GM12878 (cell line): ENCODE measurements at regions of chr15 and their contacts with region 1.

Region 1: DNA sequence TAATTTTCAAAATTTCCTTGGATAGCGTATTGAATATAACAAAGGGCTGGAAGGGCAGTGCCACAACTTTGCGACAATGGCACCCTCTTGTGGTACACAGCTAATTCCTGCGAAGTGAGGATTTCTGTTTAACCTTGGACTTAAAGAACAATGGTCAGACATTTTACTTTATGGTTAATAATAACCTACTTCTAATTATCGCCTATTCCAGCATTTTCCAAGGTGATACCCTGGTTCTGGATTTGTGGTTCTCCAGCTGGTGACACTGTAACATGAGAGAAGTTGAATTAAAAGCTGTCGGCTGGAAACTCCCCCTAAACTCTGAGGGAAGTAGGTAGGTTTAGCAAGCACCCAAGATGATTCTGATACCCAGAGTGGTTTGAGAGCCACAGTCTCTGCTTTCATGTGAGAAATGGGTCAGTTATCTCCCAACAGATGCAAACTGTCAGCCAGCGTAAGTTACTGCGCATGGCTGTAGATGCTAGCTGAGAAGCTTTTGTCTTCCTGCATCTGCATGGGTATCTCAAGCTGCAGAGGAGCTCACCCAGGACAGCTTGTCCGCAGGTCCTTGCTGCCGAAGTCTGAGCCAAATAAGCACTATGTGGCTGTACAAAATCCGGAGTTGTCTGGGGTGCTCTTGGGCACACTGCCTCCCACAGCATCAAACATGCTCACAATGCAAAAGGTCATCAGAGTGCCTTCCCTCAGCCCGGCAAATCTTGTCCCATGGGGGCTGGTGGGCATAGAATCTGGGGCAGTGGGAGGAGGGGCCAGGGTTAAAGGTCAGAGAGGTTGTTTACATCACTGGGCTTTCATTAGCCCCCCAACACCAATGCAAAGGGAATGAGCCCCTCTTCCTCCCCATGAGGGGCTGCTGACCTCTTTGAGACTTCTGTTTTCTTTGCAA is 6.6 kb upstream of the CHSY1 start:
- DNase-seq: peak; percentile 51
- ATAC-seq: peak; percentile 88
- H3K4me3 ChIP-seq: no peak overlapping the region
- H3K27ac ChIP-seq: no peak overlapping the region
- H3K4me1 ChIP-seq: peaks cover 9% of the 10 kb centered on the region
- H3K27me3 ChIP-seq: no peaks in the 10 kb centered on the region
- CTCF ChIP-seq: peak; percentile 76 to 95 (median 92); a peak in 5 of 6 replicates
- EP300 ChIP-seq: peak in 1 of 2 experiments; percentile 70; a peak in 2 of 4 replicates
- POLR2A ChIP-seq: no peak
- RAD21 ChIP-seq: peak; percentile 97

Region 2: GRCh38 chr15:100349696-100350433 is 908.6 kb before region 1 on chr15:
- CTCF ChIA-PET with region 1: no interaction called
- POLR2A ChIA-PET with region 1: no interaction called
- RAD21 ChIA-PET with region 1: no interaction called
- SMC1A ChIA-PET with region 1: no interaction called
- in situ Hi-C with region 1: no loop called
- intact Hi-C with region 1: no loop called
- DNase-seq: peak; percentile 11
- ATAC-seq: peak; percentile 98
- H3K4me3 ChIP-seq: peak overlapping the region; percentile 62; the same call in 1 of the 2 replicates
- H3K27ac ChIP-seq: 0 out of 2 replicates have a peak overlapping the region, but pooled peaks have one; percentile 24
- H3K4me1 ChIP-seq: no peaks in the 10 kb centered on the region
- H3K27me3 ChIP-seq: no peaks in the 10 kb centered on the region
- CTCF ChIP-seq: peak; percentile 49 to 72 (median 68)
- EP300 ChIP-seq: no peak
- POLR2A ChIP-seq: no peak
- RAD21 ChIP-seq: peak; percentile 43

Region 3: GRCh38 chr15:101088788-101089583 is 169.5 kb before region 1 on chr15:
- CTCF ChIA-PET with region 1: interaction called, 126 read pairs
- POLR2A ChIA-PET with region 1: interaction called, 3 read pairs
- RAD21 ChIA-PET with region 1: interaction called, 69 read pairs
- SMC1A ChIA-PET with region 1: interaction called, 30 read pairs
- in situ Hi-C with region 1: loop called (anchors 5 kb)
- intact Hi-C with region 1: loop called (anchors 1 kb)
- DNase-seq: no peak
- ATAC-seq: peak; percentile 98
- H3K4me3 ChIP-seq: no peak overlapping the region
- H3K27ac ChIP-seq: no peak overlapping the region
- H3K4me1 ChIP-seq: no peaks in the 10 kb centered on the region
- H3K27me3 ChIP-seq: no peaks in the 10 kb centered on the region
- CTCF ChIP-seq: peak; percentile 94 to 98 (median 97)
- EP300 ChIP-seq: no peak
- POLR2A ChIP-seq: no peak
- RAD21 ChIP-seq: peak; percentile 80

Region 4: GRCh38 chr15:101121511-101122090 is 136.9 kb before region 1 on chr15:
- CTCF ChIA-PET with region 1: interaction called, 60 read pairs
- POLR2A ChIA-PET with region 1: interaction called, 5 read pairs
- RAD21 ChIA-PET with region 1: interaction called, 12 read pairs
- SMC1A ChIA-PET with region 1: interaction called, 29 read pairs
- in situ Hi-C with region 1: no loop called
- intact Hi-C with region 1: no loop called
- DNase-seq: no peak
- ATAC-seq: peak; percentile 79
- H3K4me3 ChIP-seq: no peak overlapping the region
- H3K27ac ChIP-seq: no peak overlapping the region
- H3K4me1 ChIP-seq: peaks cover 30% of the 10 kb centered on the region
- H3K27me3 ChIP-seq: no peaks in the 10 kb centered on the region; a peak in 1 of 4 replicates
- CTCF ChIP-seq: peak; percentile 32 to 56 (median 33); a peak in 5 of 6 replicates
- EP300 ChIP-seq: no peak
- POLR2A ChIP-seq: no peak
- RAD21 ChIP-seq: peak; percentile 54

Region 5: GRCh38 chr15:101201406-101202174 is 56.9 kb before region 1 on chr15:
- CTCF ChIA-PET with region 1: interaction called, 7 read pairs
- POLR2A ChIA-PET with region 1: no interaction called
- RAD21 ChIA-PET with region 1: interaction called, 6 read pairs
- SMC1A ChIA-PET with region 1: interaction called, 4 read pairs
- in situ Hi-C with region 1: no loop called
- intact Hi-C with region 1: loop called (anchors 2 kb)
- DNase-seq: no peak
- ATAC-seq: peak; percentile 7; the same call in 1 of the 3 replicates
- H3K4me3 ChIP-seq: no peak overlapping the region
- H3K27ac ChIP-seq: peak overlapping the region; percentile 31; the same call in 1 of the 2 replicates
- H3K4me1 ChIP-seq: peaks cover 48% of the 10 kb centered on the region
- H3K27me3 ChIP-seq: no peaks in the 10 kb centered on the region
- CTCF ChIP-seq: no peak
- EP300 ChIP-seq: no peak
- POLR2A ChIP-seq: no peak
- RAD21 ChIP-seq: no peak

Region 6: DNA sequence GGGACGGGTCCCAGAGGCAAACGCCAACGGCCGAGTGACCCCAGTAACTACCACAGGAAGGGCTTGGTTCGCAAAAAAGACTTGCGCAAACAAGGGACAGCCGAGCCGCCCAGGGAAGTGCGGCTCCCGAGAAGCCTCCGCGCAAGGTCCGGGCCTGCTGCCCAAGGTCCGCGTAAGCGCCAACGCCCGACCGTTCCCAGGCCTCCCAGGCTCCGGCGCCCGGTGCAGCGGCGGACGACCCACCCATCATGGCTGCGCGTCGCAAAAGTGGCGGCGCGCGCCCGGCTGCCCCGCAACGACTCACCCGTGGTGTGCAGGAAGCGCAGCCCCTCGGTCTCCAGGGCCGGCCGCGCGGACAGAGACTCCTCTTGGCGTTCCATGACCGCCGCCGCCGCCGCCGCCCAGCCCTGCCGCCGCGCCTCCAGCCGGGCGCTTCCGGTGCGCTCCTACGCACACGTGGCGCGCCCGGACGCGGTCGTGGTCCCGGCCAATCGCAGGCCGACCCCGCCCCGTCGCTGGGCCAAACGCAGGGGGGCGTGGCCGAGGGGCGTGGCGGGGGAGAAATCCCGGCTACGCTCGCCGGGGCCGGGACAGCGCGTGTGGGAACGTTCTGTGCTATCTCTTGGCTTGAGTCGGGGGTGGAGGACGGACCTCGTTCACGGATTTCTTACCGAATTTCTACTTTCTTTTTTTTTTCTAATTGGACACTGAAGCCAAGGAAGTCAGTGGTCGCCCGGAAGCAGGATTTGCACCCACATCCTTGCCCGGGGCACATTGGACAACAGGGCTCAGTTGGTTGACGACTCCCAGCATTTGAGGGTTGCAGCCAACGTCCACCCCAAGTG is 18.8 kb after region 1 on chr15 and contains the start of gene SELENOS:
- CTCF ChIA-PET with region 1: interaction called, 16 read pairs
- POLR2A ChIA-PET with region 1: interaction called, 8 read pairs
- RAD21 ChIA-PET with region 1: interaction called, 28 read pairs
- SMC1A ChIA-PET with region 1: interaction called, 41 read pairs
- in situ Hi-C with region 1: no loop called
- intact Hi-C with region 1: no loop called
- DNase-seq: no peak
- ATAC-seq: peak; percentile 94
- H3K4me3 ChIP-seq: peak within 1 kb of the TSS; percentile 98
- H3K27ac ChIP-seq: peak within 1 kb of the TSS; percentile 71
- H3K4me1 ChIP-seq: peaks cover 10% of the 10 kb centered on the region
- H3K27me3 ChIP-seq: no peaks in the 10 kb centered on the region
- CTCF ChIP-seq: no peak
- EP300 ChIP-seq: no peak
- POLR2A ChIP-seq: peak; percentile 82
- RAD21 ChIP-seq: no peak
- polyA plus RNA-seq, gene SELENOS: 25.8 to 36.7 TPM

Region 7: DNA sequence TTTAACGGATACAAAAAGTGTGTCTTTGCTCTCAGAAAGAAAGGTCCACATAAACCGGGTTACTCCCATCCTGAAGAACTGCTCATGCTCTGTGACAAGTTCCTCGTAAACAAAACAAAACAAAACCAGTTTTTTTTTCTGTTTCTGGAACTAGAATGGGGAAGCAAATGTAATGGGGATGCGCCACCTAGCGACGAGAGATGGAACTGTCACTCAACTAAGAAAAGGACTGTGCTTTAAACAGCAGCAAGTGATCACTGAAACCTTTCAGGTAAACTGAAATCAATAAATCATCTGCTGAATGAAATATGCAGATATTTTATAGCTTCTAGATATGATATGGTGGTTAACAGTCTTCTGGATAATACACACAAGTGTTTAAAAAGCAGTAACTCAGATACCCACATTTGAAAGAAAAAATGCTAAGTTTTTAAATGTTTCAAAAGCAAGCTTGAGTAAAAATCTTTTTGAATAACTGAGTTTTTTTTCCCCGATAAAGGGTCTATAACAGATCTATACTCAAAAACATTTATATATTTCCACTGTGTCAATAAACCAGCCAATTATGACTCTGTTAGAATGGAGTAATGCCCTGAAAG is 382.8 kb after region 1 on chr15:
- CTCF ChIA-PET with region 1: interaction called, 4 read pairs
- POLR2A ChIA-PET with region 1: no interaction called
- RAD21 ChIA-PET with region 1: interaction called, 7 read pairs
- SMC1A ChIA-PET with region 1: interaction called, 14 read pairs
- in situ Hi-C with region 1: no loop called
- intact Hi-C with region 1: no loop called
- DNase-seq: peak; percentile 56
- ATAC-seq: peak; percentile 89
- H3K4me3 ChIP-seq: 0 out of 2 replicates have a peak overlapping the region, but pooled peaks have one; percentile 8
- H3K27ac ChIP-seq: no peak overlapping the region
- H3K4me1 ChIP-seq: peaks cover 5% of the 10 kb centered on the region; the same call in 1 of the 2 replicates
- H3K27me3 ChIP-seq: no peaks in the 10 kb centered on the region
- CTCF ChIP-seq: peak; percentile 87 to 96 (median 91)
- EP300 ChIP-seq: no peak
- POLR2A ChIP-seq: no peak
- RAD21 ChIP-seq: peak; percentile 96